Activated CD4-positive, alpha-beta memory T cell treated with anti-CD3 and anti-CD28 coated beads for 36 hours (primary cell): ENCODE measurements at regions of chrX and their contacts with region 1.

Region 1: GRCh38 chrX:30889147-30890140 is at the start of gene TAB3:
- DNase-seq: peak; percentile 95
- H3K4me3 Mint-ChIP-seq: peak within 1 kb of the TSS; percentile 82
- H3K27ac Mint-ChIP-seq: peak within 1 kb of the TSS; percentile 90
- H3K4me1 Mint-ChIP-seq: peaks cover 35% of the 10 kb centered on the region
- H3K27me3 Mint-ChIP-seq: no peaks in the 10 kb centered on the region
- total RNA-seq, gene TAB3: 19.6 to 24.2 TPM

Region 2: DNA sequence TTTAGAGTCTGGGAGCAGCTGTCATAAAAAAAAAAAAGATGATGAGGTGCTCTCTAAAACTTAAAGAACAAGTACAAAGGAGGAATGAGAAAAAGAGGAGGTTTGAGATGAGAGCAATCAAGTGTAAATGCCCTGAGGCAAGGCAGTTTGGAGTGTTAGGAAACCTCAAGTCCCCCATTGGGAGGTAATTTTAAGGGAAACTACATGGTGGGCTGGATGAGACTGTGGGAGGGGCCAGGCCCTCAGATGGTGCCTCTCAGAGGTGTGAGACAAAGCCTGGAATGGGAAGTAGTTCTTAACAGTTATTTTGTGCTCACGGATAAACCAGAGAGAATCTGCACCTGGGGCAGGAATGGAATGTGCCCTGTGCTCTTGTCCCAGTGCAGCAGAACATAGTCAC is 660.9 kb before region 1 on chrX:
- CTCF ChIA-PET with region 1: no interaction called
- POLR2A ChIA-PET with region 1: no interaction called
- intact Hi-C with region 1: no loop called
- DNase-seq: no peak
- H3K4me3 Mint-ChIP-seq: no peak overlapping the region
- H3K27ac Mint-ChIP-seq: no peak overlapping the region
- H3K4me1 Mint-ChIP-seq: no peaks in the 10 kb centered on the region
- H3K27me3 Mint-ChIP-seq: no peaks in the 10 kb centered on the region

Region 3: DNA sequence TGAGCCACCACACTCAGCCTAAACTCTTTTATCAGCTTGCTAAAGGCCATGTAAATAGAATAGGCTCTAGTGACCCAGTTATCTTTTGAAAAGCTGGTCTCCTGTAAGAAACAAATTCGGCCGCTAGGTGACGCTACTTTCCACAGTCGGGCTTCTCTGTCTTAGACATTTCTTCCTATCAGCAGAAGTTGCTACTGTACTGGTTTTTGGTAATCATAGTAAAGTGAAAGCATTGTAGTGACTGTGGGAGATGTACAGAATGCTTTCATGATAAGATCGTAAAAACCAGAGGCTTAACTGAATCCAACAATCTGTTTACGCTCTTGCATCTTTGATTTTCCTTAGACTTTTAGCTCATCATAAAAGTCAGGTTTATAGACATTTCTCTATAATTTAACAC is 153.6 kb before region 1 on chrX:
- CTCF ChIA-PET with region 1: interaction called, 12 read pairs
- POLR2A ChIA-PET with region 1: interaction called, 3 read pairs
- intact Hi-C with region 1: loop called (anchors 2 kb)
- DNase-seq: peak; percentile 82
- H3K4me3 Mint-ChIP-seq: no peak overlapping the region
- H3K27ac Mint-ChIP-seq: no peak overlapping the region
- H3K4me1 Mint-ChIP-seq: peaks cover 10% of the 10 kb centered on the region
- H3K27me3 Mint-ChIP-seq: no peaks in the 10 kb centered on the region

Region 4: DNA sequence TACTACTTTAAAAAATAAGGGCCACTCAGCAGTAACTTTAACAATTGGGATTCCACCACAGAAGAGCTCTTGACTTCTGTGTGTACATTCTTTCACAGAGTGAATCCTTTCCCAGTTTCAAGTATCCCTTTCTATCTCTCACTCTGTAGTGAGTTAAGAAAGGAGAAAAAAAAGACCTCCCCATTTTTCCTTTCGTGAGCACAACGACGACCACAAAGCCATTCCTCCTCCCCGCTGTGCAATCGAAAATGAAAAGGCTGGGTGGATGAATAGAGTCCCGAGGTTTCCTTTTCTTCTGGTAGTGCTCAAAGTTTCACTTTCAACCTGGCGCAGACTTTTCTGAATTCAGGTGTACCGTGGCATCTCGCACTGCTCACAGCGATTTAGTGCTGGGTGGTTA is 58.4 kb before region 1 on chrX:
- CTCF ChIA-PET with region 1: no interaction called
- POLR2A ChIA-PET with region 1: interaction called, 4 read pairs
- intact Hi-C with region 1: loop called (anchors 1 kb)
- DNase-seq: peak; percentile 58
- H3K4me3 Mint-ChIP-seq: no peak overlapping the region
- H3K27ac Mint-ChIP-seq: no peak overlapping the region
- H3K4me1 Mint-ChIP-seq: peaks cover 29% of the 10 kb centered on the region
- H3K27me3 Mint-ChIP-seq: no peaks in the 10 kb centered on the region

Region 5: DNA sequence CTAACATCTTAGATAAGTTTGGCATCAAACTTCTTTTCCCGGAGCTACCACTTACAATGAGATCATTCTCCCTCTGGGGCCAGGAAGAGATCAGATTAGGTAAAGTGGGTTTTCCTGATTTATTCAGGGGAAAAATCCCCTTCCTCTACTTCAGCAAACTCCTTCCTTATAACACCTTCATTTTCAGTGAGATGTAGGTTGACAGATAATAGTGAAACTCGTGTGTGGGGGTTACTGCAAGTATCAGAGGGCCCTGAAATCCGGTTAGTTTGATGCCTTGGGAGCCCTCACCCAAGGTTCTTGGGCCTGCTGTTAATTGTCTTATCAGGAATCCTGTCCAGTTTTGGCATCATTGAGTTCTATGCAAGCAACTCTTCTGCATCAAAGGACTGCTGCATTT is 171.6 kb after region 1 on chrX:
- CTCF ChIA-PET with region 1: no interaction called
- POLR2A ChIA-PET with region 1: no interaction called
- intact Hi-C with region 1: loop called (anchors 10 kb)
- DNase-seq: no peak
- H3K4me3 Mint-ChIP-seq: no peak overlapping the region
- H3K27ac Mint-ChIP-seq: no peak overlapping the region
- H3K4me1 Mint-ChIP-seq: peaks cover 10% of the 10 kb centered on the region
- H3K27me3 Mint-ChIP-seq: no peaks in the 10 kb centered on the region